ENCODE measurements at regions of chr11 and their contacts with region 1.

Region 1: DNA sequence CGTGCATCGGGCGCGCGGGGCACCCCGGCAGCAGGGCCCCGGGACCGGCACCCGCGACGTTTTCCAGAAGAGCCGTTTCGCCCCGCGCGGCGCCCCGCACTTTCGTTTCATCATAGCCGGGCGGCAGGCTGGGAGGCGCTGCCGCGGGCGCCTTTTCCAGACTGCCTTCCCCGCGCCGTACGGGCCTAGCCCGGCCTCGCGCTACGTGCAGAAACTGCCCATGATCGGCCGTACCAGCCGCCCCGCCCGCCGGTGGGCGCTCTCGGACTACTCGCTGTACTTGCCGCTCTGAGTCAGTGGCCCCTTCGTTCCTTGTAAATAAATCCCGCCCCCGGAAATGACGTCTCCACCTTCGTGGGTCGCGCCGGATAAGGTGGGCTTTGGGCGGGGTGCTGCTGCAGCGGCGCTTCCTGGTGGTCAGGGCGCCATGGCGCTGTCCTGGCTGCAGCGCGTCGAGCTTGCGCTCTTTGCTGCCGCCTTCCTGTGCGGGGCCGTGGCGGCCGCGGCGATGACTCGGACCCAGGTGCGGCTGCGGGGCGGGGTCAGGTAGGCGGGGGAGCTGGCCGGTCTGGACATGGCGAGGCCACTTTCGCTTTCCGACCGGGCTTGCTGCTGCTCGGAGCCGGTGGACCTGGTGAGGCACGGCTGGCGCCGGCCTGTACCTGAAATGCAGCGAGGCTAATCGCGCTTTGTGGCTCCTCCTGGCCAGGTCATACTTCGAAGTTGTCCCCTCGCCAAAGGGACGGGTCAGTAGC is at the start of gene TMEM179B:
- DNase-seq: peak; percentile 96
- ATAC-seq: peak; percentile 77
- H3K4me3 ChIP-seq: peak within 1 kb of the TSS; percentile 65 to 88 (median 81)
- H3K27ac ChIP-seq: peak within 1 kb of the TSS; percentile 79
- H3K4me1 ChIP-seq: peaks cover 45% of the 10 kb centered on the region
- H3K27me3 ChIP-seq: no peaks in the 10 kb centered on the region; a peak in 1 of 5 replicates
- CTCF ChIP-seq: peak; percentile 79
- EP300 ChIP-seq: no peak; a peak in 1 of 4 replicates
- POLR2A ChIP-seq: peak; percentile 91 to 98
- RAD21 ChIP-seq: no peak
- total RNA-seq, gene TMEM179B: 11.4 and 24.8 TPM in 2 replicates

Region 2: GRCh38 chr11:62560566-62561103 is 226.5 kb before region 1 on chr11:
- CTCF ChIA-PET with region 1: no interaction called
- POLR2A ChIA-PET with region 1: no interaction called
- in situ Hi-C with region 1: no loop called
- intact Hi-C with region 1: no loop called
- DNase-seq: peak; percentile 91
- ATAC-seq: peak; percentile 89
- H3K4me3 ChIP-seq: no peak overlapping the region
- H3K27ac ChIP-seq: peak overlapping the region; percentile 55
- H3K4me1 ChIP-seq: peaks cover 71% of the 10 kb centered on the region
- H3K27me3 ChIP-seq: no peaks in the 10 kb centered on the region
- CTCF ChIP-seq: peak; percentile 95
- EP300 ChIP-seq: no peak
- POLR2A ChIP-seq: peak; percentile 8 to 27; a peak in 1 of 4 replicates
- RAD21 ChIP-seq: peak; percentile 95

Region 3: DNA sequence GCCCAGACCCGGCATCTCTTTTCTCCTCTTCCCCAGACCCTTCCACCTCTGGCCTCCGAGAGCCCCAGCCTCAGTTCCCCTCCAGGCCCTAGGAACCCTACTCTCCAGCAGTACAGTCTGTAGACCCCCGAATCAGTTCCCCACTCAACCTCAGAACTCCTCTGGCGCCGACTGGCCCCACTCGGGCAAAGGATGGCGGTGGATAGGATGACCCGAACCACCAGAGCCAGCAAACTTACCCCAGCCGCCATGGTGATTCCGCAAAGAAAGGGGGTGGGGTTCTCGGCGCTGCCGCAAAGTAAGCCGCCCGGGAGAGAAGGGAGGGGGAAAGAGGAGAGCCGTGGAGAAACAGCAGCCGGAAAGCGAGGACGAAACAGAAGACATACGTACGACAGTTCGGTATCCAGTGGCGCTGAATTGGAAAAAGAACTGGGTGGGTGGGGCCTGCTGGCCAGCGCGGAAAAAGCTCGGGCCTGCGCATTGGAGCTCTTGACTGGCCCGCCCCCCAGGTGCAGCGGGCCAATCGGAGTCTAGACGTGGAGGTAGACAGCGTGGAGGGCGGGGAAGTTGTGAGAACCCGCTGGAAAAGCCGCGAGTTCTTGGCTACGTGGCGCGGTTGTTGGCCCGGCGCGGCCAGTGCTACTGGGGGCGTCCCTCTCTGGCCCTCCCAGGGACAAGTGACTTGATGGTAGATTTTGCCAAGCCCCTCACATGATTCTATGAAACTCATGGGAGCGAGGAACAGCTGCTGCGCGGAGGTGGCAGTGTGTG is 213.4 kb before region 1 on chr11 and contains the start of gene EEF1G:
- CTCF ChIA-PET with region 1: no interaction called
- POLR2A ChIA-PET with region 1: no interaction called
- in situ Hi-C with region 1: no loop called
- intact Hi-C with region 1: no loop called
- DNase-seq: peak; percentile 99
- ATAC-seq: peak; percentile 93
- H3K4me3 ChIP-seq: peak within 1 kb of the TSS; percentile 80 to 96 (median 95)
- H3K27ac ChIP-seq: peak within 1 kb of the TSS; percentile 85
- H3K4me1 ChIP-seq: peaks cover 63% of the 10 kb centered on the region
- H3K27me3 ChIP-seq: no peaks in the 10 kb centered on the region; a peak in 1 of 5 replicates
- CTCF ChIP-seq: no peak; the same call in 1 of the 2 replicates
- EP300 ChIP-seq: no peak
- POLR2A ChIP-seq: peak; percentile 89 to 91
- RAD21 ChIP-seq: no peak
- total RNA-seq, gene EEF1G: 1,787 and 2,092 TPM in 2 replicates

Region 4: GRCh38 chr11:62753736-62754603 is 33.2 kb before region 1 on chr11 and contains the start of gene ZBTB3:
- CTCF ChIA-PET with region 1: no interaction called
- POLR2A ChIA-PET with region 1: interaction called, 43 read pairs
- in situ Hi-C with region 1: no loop called
- intact Hi-C with region 1: no loop called
- DNase-seq: peak; percentile 99
- ATAC-seq: peak; percentile 96
- H3K4me3 ChIP-seq: peak within 1 kb of the TSS; percentile 55 to 86 (median 81)
- H3K27ac ChIP-seq: peak within 1 kb of the TSS; percentile 75
- H3K4me1 ChIP-seq: peaks cover 35% of the 10 kb centered on the region
- H3K27me3 ChIP-seq: no peaks in the 10 kb centered on the region
- CTCF ChIP-seq: peak; percentile 29; the same call in 1 of the 2 replicates
- EP300 ChIP-seq: no peak
- POLR2A ChIP-seq: peak; percentile 83 to 88
- RAD21 ChIP-seq: no peak; the same call in 1 of the 2 replicates
- total RNA-seq, gene ZBTB3: 4.0 and 5.2 TPM in 2 replicates

Region 5: GRCh38 chr11:62805076-62805892 is 18.1 kb after region 1 on chr11 and contains the start of gene NXF1:
- CTCF ChIA-PET with region 1: no interaction called
- POLR2A ChIA-PET with region 1: interaction called, 12 read pairs
- in situ Hi-C with region 1: no loop called
- intact Hi-C with region 1: loop called (anchors 2 kb)
- DNase-seq: peak; percentile 85
- ATAC-seq: peak; percentile 85
- H3K4me3 ChIP-seq: peak within 1 kb of the TSS; percentile 86 to 97 (median 92)
- H3K27ac ChIP-seq: peak within 1 kb of the TSS; percentile 58
- H3K4me1 ChIP-seq: peaks cover 23% of the 10 kb centered on the region
- H3K27me3 ChIP-seq: no peaks in the 10 kb centered on the region; a peak in 1 of 5 replicates
- CTCF ChIP-seq: no peak; the same call in 1 of the 2 replicates
- EP300 ChIP-seq: no peak
- POLR2A ChIP-seq: peak; percentile 100
- RAD21 ChIP-seq: peak; percentile 66; the same call in 1 of the 2 replicates
- total RNA-seq, gene NXF1: 26.2 and 30.9 TPM in 2 replicates

Region 6: GRCh38 chr11:62831520-62832335 is 44.5 kb after region 1 on chr11 and contains the start of gene STX5:
- CTCF ChIA-PET with region 1: no interaction called
- POLR2A ChIA-PET with region 1: interaction called, 30 read pairs
- in situ Hi-C with region 1: loop called (anchors 5 kb)
- intact Hi-C with region 1: loop called (anchors 2 kb)
- DNase-seq: peak; percentile 97
- ATAC-seq: peak; percentile 90
- H3K4me3 ChIP-seq: peak within 1 kb of the TSS; percentile 78 to 100 (median 99)
- H3K27ac ChIP-seq: peak within 1 kb of the TSS; percentile 95
- H3K4me1 ChIP-seq: peaks cover 32% of the 10 kb centered on the region
- H3K27me3 ChIP-seq: no peaks in the 10 kb centered on the region; a peak in 1 of 5 replicates
- CTCF ChIP-seq: no peak
- EP300 ChIP-seq: no peak
- POLR2A ChIP-seq: peak; percentile 79 to 88
- RAD21 ChIP-seq: no peak
- total RNA-seq, gene STX5: 26.9 and 29.2 TPM in 2 replicates

Region 7: DNA sequence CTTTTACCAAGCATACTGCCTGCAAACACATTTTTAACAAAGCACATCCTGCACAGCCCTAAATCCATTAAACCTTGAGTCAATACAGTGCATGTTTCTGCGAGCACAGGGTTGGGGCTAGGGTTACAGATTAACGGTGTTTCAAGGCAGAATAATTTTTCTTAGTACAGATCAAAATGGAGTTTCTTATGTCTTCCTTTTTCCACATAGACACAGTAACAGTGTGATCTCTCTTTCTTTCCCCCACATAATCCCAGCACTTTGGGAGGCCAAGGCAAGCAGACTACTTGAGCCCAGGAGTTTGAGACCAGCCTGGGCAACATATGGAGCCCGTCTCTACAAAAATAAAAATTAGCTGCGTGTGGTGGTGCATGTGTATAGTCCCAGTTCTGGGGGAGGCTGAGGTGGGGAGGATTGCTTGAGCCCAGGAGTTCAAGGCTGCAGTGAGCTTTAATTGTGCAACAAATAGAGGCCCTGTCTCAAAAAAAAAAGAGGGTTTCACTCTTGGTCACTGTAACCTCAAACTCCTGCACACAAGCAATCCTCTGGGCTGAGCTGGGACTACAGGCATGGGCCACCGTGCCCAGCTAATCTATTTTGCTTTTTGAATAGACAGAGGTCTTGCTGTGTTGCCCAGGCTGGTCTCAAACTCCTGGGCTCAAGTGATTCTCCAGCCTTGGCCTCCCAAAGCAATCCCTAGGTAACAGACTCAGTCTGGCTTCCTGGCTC is 73.8 kb after region 1 on chr11:
- CTCF ChIA-PET with region 1: interaction called, 25 read pairs
- POLR2A ChIA-PET with region 1: interaction called, 68 read pairs
- in situ Hi-C with region 1: no loop called
- intact Hi-C with region 1: loop called (anchors 1 kb)
- DNase-seq: no peak
- ATAC-seq: peak; percentile 48
- H3K4me3 ChIP-seq: peak overlapping the region in 1 of 3 experiments; percentile 20; a peak in 1 of 6 replicates
- H3K27ac ChIP-seq: peak overlapping the region; percentile 59
- H3K4me1 ChIP-seq: peaks cover 67% of the 10 kb centered on the region
- H3K27me3 ChIP-seq: no peaks in the 10 kb centered on the region; a peak in 1 of 5 replicates
- CTCF ChIP-seq: no peak
- EP300 ChIP-seq: no peak
- POLR2A ChIP-seq: no peak
- RAD21 ChIP-seq: no peak

Region 8: DNA sequence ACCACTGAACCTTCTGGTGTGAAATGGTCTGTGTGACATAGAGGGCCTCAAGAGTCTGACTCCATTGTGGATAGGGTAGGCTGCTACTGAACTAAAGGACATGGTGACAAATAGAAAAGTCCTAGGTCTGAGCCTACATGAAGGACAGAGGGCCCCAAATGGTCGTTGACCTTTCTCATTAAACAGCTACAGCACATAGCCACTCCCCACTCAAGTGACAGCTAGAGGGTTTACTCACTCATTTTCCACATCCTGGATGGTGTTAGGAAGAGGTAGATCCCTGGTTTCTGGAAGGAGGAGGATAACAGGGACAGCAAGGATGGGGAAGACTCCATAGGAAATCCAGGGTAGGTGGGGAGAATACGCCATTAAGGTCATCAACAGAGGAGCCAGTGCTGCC is 293.5 kb after region 1 on chr11:
- CTCF ChIA-PET with region 1: no interaction called
- POLR2A ChIA-PET with region 1: no interaction called
- in situ Hi-C with region 1: no loop called
- intact Hi-C with region 1: no loop called
- DNase-seq: peak; percentile 3
- ATAC-seq: no peak
- H3K4me3 ChIP-seq: no peak overlapping the region
- H3K27ac ChIP-seq: no peak overlapping the region
- H3K4me1 ChIP-seq: peaks cover 8% of the 10 kb centered on the region
- H3K27me3 ChIP-seq: peaks cover 0 to 10% of the 10 kb centered on the region in 2 experiments; a peak in 1 of 5 replicates
- CTCF ChIP-seq: no peak
- EP300 ChIP-seq: no peak
- POLR2A ChIP-seq: no peak
- RAD21 ChIP-seq: no peak

Region 9: DNA sequence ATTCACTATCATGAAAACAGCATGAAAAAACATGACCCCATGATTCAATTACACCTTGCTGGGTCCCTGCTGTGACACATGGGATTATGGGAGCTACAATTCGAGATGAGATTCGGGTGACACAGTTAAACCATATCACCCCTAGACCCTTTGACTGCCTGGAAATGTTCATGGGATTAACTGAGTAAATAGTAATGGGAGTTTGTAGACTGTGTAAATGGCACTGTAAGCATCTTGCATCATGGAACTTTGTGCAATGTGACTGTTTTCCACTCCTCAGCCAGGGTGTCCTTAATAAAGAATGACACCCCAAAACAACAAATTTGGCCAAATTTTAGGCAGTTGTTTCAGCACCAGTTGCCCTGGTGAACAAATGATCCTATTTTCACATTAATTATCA is 464.1 kb after region 1 on chr11:
- CTCF ChIA-PET with region 1: no interaction called
- POLR2A ChIA-PET with region 1: no interaction called
- in situ Hi-C with region 1: no loop called
- intact Hi-C with region 1: no loop called
- DNase-seq: peak; percentile 80
- ATAC-seq: peak; percentile 32
- H3K4me3 ChIP-seq: no peak overlapping the region
- H3K27ac ChIP-seq: peak overlapping the region; percentile 80
- H3K4me1 ChIP-seq: peaks cover 80% of the 10 kb centered on the region
- H3K27me3 ChIP-seq: no peaks in the 10 kb centered on the region
- CTCF ChIP-seq: no peak
- EP300 ChIP-seq: peak; percentile 26 to 88; a peak in 2 of 4 replicates
- POLR2A ChIP-seq: no peak
- RAD21 ChIP-seq: no peak